ENCODE measurements at regions of chr5 and their contacts with region 1.

Region 1: DNA sequence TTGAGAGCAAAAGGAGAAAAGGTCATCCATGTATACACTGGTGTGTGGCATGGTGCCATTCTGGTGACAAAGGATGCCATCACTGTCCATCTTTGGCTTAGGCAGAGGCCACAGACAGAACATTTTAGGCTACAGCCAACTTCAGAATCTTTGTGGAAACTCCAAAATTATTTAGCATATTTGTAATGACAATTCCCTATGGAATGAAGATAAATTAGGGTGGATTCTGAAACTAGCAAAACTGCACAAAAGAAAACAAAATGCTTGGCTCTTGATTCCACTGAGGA is 92.5 kb downstream of the FBXW11 start:
- DNase-seq: no peak
- ATAC-seq: no peak
- H3K4me3 ChIP-seq: no peak overlapping the region
- H3K4me3 Mint-ChIP-seq: no peak overlapping the region
- H3K27ac ChIP-seq: peak overlapping the region in 1 of 2 donors; percentile 68
- H3K27ac Mint-ChIP-seq: peak overlapping the region; percentile 70
- H3K4me1 ChIP-seq: peaks cover 19 to 36% of the 10 kb centered on the region in 2 donors
- H3K4me1 Mint-ChIP-seq: peaks cover 65% of the 10 kb centered on the region
- H3K27me3 ChIP-seq: no peaks in the 10 kb centered on the region
- H3K27me3 Mint-ChIP-seq: no peaks in the 10 kb centered on the region
- CTCF ChIP-seq: no peak

Region 2: DNA sequence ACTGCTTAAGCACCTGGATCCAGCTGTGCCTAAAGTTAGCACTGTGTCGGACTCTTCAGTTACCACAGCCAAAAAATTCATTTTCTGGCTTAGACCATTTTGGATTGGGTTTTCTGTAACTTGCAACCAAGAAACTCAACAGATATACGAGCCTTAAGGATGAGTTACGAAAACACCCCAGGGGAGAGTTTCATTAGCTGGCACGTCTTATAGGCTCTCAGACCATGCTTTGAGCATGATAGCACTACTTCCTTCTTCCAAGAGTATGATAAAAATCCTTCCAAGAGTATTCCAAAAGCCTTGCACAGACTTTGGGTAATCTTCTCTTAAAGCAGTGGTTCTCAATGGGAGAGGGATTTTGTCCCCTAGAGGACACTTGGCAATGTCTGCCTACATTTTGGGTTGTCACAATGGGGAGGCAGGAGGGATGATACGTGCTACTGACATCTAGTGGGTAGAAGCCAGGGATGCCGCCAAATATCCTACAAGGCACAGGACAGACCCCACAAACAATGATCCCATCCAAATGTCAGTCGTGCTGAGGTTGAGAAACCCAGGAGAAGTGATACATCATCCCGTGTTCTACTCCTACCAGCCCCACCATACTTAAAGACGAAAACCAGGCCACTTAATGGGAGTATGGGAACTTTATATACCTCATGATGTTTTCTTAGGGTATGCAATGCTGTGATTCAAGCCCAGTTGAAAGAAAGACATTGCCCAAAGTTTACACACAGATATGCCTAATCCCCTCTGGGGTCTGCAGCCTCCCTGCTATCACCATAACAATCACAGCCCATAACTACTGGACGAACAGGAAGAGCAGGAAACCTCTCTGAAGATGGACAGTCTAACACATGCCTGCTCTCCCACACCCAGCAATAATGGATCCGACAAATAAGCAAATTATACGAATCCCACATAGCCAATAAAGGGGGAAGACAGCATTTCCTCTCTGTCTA is 63.3 kb before region 1 on chr5:
- CTCF ChIA-PET with region 1: no interaction called
- POLR2A ChIA-PET with region 1: no interaction called
- intact Hi-C with region 1: no loop called
- DNase-seq: no peak
- ATAC-seq: no peak
- H3K4me3 ChIP-seq: no peak overlapping the region
- H3K4me3 Mint-ChIP-seq: no peak overlapping the region
- H3K27ac ChIP-seq: no peak overlapping the region
- H3K27ac Mint-ChIP-seq: no peak overlapping the region
- H3K4me1 ChIP-seq: no peaks in the 10 kb centered on the region
- H3K4me1 Mint-ChIP-seq: peaks cover under 1% of the 10 kb centered on the region
- H3K27me3 ChIP-seq: no peaks in the 10 kb centered on the region
- H3K27me3 Mint-ChIP-seq: no peaks in the 10 kb centered on the region
- CTCF ChIP-seq: no peak

Region 3: GRCh38 chr5:171898386-171898785 is 15.5 kb before region 1 on chr5:
- CTCF ChIA-PET with region 1: interaction called, 17 read pairs
- POLR2A ChIA-PET with region 1: no interaction called
- intact Hi-C with region 1: no loop called
- DNase-seq: no peak
- ATAC-seq: no peak
- H3K4me3 ChIP-seq: no peak overlapping the region
- H3K4me3 Mint-ChIP-seq: no peak overlapping the region
- H3K27ac ChIP-seq: no peak overlapping the region
- H3K27ac Mint-ChIP-seq: no peak overlapping the region
- H3K4me1 ChIP-seq: no peaks in the 10 kb centered on the region
- H3K4me1 Mint-ChIP-seq: peaks cover 2% of the 10 kb centered on the region
- H3K27me3 ChIP-seq: no peaks in the 10 kb centered on the region
- H3K27me3 Mint-ChIP-seq: no peaks in the 10 kb centered on the region
- CTCF ChIP-seq: no peak

Region 4: GRCh38 chr5:171961117-171961516 is 47.2 kb after region 1 on chr5:
- CTCF ChIA-PET with region 1: interaction called, 5 read pairs
- POLR2A ChIA-PET with region 1: no interaction called
- intact Hi-C with region 1: loop called (anchors 10 kb)
- DNase-seq: no peak
- ATAC-seq: no peak
- H3K4me3 ChIP-seq: no peak overlapping the region
- H3K4me3 Mint-ChIP-seq: peak overlapping the region; percentile 44
- H3K27ac ChIP-seq: no peak overlapping the region
- H3K27ac Mint-ChIP-seq: peak overlapping the region; percentile 50
- H3K4me1 ChIP-seq: peaks cover 37 to 73% of the 10 kb centered on the region in 2 donors
- H3K4me1 Mint-ChIP-seq: peaks cover 79% of the 10 kb centered on the region
- H3K27me3 ChIP-seq: no peaks in the 10 kb centered on the region
- H3K27me3 Mint-ChIP-seq: no peaks in the 10 kb centered on the region
- CTCF ChIP-seq: no peak

Region 5: GRCh38 chr5:172035039-172035438 is 121.1 kb after region 1 on chr5:
- CTCF ChIA-PET with region 1: interaction called, 227 read pairs
- POLR2A ChIA-PET with region 1: interaction called, 3 read pairs
- intact Hi-C with region 1: loop called (anchors 1 kb)
- DNase-seq: peak; percentile 45
- ATAC-seq: peak; percentile 63
- H3K4me3 ChIP-seq: peak overlapping the region in 1 of 5 experiments; percentile 26
- H3K4me3 Mint-ChIP-seq: peak overlapping the region; percentile 15
- H3K27ac ChIP-seq: peak overlapping the region in 1 of 2 donors; percentile 61
- H3K27ac Mint-ChIP-seq: peak overlapping the region; percentile 50
- H3K4me1 ChIP-seq: peaks cover 12 to 15% of the 10 kb centered on the region in 2 donors
- H3K4me1 Mint-ChIP-seq: peaks cover 15% of the 10 kb centered on the region
- H3K27me3 ChIP-seq: no peaks in the 10 kb centered on the region
- H3K27me3 Mint-ChIP-seq: no peaks in the 10 kb centered on the region
- CTCF ChIP-seq: no peak

Region 6: GRCh38 chr5:172059661-172060100 is 145.8 kb after region 1 on chr5:
- CTCF ChIA-PET with region 1: interaction called, 72 read pairs
- POLR2A ChIA-PET with region 1: interaction called, 3 read pairs
- intact Hi-C with region 1: loop called (anchors 1 kb)
- DNase-seq: peak; percentile 46
- ATAC-seq: no peak
- H3K4me3 ChIP-seq: no peak overlapping the region
- H3K4me3 Mint-ChIP-seq: no peak overlapping the region
- H3K27ac ChIP-seq: no peak overlapping the region
- H3K27ac Mint-ChIP-seq: no peak overlapping the region
- H3K4me1 ChIP-seq: no peaks in the 10 kb centered on the region
- H3K4me1 Mint-ChIP-seq: no peaks in the 10 kb centered on the region
- H3K27me3 ChIP-seq: no peaks in the 10 kb centered on the region
- H3K27me3 Mint-ChIP-seq: no peaks in the 10 kb centered on the region
- CTCF ChIP-seq: peak; percentile 67

Region 7: DNA sequence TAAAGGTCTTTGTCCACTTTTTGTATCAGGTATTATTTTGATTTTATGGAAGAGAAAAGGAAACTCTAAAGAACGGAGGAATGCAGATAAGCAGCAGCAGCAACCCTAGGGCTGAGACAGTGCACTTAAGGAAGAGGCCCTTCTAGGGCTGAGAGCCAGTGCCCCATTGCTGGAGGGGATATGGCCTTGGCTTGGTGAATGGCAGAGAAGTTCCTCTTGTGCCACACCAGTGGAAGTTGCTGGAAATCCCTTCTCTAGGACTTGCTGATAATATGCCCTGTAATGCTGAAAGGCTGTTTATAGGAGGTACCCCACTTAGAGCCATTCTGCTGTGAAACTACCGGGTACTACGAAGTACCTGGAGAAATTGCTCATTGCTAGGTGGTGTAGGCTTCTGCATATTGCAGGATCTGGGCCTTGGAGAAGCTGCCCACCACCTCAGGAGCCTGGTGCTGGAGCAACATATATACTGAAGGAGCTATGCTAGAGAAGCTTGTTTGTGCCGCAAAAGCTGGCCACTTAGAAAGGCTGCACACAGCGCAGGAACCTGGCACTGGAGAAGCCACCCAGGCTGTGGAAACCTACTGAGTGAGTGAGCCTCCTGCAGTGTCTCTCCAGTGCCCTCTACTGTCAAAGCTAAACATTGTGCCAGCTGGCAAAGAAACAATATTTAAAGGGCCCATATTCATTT is 379.3 kb after region 1 on chr5:
- CTCF ChIA-PET with region 1: interaction called, 26 read pairs
- POLR2A ChIA-PET with region 1: no interaction called
- intact Hi-C with region 1: loop called (anchors 1 kb)
- DNase-seq: peak; percentile 71
- ATAC-seq: peak; percentile 99
- H3K4me3 ChIP-seq: no peak overlapping the region
- H3K4me3 Mint-ChIP-seq: no peak overlapping the region
- H3K27ac ChIP-seq: no peak overlapping the region
- H3K27ac Mint-ChIP-seq: no peak overlapping the region
- H3K4me1 ChIP-seq: no peaks in the 10 kb centered on the region
- H3K4me1 Mint-ChIP-seq: peaks cover 3% of the 10 kb centered on the region
- H3K27me3 ChIP-seq: no peaks in the 10 kb centered on the region
- H3K27me3 Mint-ChIP-seq: peaks cover 8% of the 10 kb centered on the region
- CTCF ChIP-seq: peak; percentile 85

Region 8: DNA sequence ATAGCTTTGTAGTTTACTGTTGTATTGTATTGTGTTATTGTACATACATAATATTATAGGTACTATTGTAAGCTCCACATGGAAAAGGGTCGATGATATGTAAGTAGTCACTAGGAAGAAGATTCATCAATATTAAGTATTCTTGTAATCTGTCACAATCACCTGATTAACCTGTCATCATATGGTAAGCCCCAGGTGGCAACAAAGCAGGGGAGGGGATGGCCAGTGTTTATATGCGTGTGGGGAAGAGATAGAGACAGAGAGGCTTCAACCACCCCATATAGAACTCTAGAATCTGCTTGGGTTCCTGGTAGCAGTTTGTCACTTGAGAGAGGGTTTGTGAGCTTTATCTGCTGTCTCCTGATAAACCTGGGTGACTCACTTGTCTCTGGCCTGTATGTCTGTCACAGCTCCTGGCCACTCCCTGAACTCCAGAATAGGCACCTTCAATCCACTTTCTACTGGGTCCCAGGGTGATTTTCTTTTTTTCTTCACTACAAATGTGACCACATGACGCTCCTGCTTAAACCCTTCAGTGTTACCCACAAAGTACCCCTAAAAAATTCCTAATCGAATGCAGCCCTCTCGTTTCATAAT is 1925.3 kb after region 1 on chr5:
- CTCF ChIA-PET with region 1: no interaction called
- POLR2A ChIA-PET with region 1: no interaction called
- intact Hi-C with region 1: no loop called
- DNase-seq: no peak
- ATAC-seq: no peak
- H3K4me3 ChIP-seq: no peak overlapping the region
- H3K4me3 Mint-ChIP-seq: no peak overlapping the region
- H3K27ac ChIP-seq: no peak overlapping the region
- H3K27ac Mint-ChIP-seq: no peak overlapping the region
- H3K4me1 ChIP-seq: peaks cover 0 to 7% of the 10 kb centered on the region in 2 donors
- H3K4me1 Mint-ChIP-seq: peaks cover 12% of the 10 kb centered on the region
- H3K27me3 ChIP-seq: no peaks in the 10 kb centered on the region
- H3K27me3 Mint-ChIP-seq: no peaks in the 10 kb centered on the region
- CTCF ChIP-seq: no peak